Activated T-helper 1 cell treated with anti-CD3 and anti-CD28 coated beads, Interleukin-12 subunit alpha, Interleukin-12 subunit beta, Interleukin-2, Interleukin-4 antibody, amounts not matched to agents 30 ng/mL and 10 ng/mL and 1 ng/mL, durations not matched to agents 14 hours and 24 hours and 36 hours (primary cell): ENCODE measurements at regions of chr11 and their contacts with region 1.

Region 1: DNA sequence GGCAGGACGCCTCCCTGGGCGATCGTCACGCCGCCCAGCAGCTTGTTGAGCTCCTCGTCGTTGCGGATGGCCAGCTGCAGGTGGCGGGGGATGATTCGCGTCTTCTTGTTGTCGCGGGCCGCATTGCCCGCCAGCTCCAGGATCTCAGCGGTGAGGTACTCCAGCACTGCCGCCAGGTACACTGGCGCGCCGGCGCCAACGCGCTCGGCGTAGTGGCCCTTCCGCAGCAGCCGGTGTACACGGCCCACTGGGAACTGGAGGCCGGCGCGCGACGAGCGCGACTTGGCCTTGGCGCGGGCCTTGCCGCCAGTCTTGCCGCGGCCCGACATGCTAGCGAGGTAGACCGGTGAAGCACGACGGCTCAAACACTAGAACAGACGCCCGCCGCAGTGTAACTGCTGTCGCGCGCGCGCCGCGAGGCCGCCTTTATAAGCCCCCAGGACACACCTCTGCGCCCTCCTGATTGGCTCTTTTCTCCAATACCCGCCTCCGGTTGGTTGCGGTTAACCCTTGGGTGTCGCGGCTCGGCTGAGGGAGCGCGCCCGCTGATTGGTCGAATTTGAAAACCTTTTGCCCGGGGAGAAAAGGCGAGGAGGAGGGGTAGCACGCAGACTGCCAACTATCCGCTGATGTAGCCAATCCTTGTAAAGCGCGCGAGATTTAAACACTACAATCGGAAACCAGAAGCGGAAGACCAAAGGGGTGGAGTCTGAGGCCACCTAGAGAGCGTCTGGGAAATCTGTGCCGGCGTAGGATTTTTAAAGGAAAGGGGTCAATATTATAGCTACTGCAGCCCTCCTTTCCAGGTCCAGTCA is 6.4 kb downstream of the DPAGT1 start:
- DNase-seq: peak; percentile 100
- H3K4me3 Mint-ChIP-seq: peak overlapping the region; percentile 95
- H3K27ac Mint-ChIP-seq: peak overlapping the region; percentile 91
- H3K4me1 Mint-ChIP-seq: peaks cover 59% of the 10 kb centered on the region
- H3K27me3 Mint-ChIP-seq: peaks cover 4% of the 10 kb centered on the region

Region 2: DNA sequence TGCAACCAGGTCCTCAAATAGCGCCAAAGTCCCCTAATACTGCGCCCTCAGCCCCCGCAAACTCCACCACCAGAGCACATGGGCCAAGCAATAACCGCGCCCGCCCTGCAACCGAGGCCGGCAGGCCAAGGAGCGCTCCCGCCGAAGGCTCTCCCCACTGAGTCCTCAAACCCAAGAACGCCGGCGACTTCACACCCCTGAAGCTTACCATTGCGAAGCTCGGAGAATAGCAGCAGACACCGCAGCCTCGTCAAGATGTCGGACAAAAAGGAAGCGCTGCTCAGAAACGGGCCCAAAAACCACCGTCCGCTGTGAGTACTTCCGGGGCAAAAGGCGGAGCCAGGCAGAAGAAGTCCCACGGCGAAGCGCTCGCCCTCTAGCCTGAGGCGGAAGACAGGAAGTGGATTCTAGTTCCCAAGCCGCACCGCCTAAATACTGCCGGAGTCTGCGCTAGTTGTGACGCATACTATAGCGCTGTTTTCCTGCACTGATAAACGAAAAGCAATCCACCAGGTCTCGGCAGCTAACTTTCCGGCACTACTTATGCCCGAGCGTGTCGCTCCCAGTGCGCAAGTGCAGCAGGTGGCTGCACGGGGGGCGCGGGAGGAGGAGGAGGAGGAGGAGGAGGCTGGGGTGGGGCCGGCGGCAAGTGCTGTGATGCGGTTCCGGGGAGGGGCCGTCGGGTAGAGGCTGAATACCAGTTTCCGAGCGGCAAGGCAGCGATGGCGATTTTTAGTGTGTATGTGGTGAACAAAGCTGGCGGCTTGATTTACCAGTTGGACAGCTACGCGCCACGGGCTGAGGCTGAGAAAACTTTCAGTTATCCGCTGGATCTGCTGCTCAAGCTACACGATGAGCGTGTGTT is 77.0 kb before region 1 on chr11 and contains the starts of genes RPS25 and TRAPPC4:
- intact Hi-C with region 1: loop called (anchors 1 kb)
- DNase-seq: peak; percentile 92
- H3K4me3 Mint-ChIP-seq: peak within 1 kb of the TSS; percentile 99
- H3K27ac Mint-ChIP-seq: peak within 1 kb of the TSS; percentile 100
- H3K4me1 Mint-ChIP-seq: peaks cover 42% of the 10 kb centered on the region
- H3K27me3 Mint-ChIP-seq: no peaks in the 10 kb centered on the region
- total RNA-seq, gene RPS25: 1,440 and 1,455 TPM in 2 replicates
- total RNA-seq, gene TRAPPC4: 141 and 142 TPM in 2 replicates

Region 3: GRCh38 chr11:119057000-119057769 is 38.1 kb before region 1 on chr11 and contains the start of gene HYOU1:
- intact Hi-C with region 1: loop called (anchors 1 kb)
- DNase-seq: peak; percentile 98
- H3K4me3 Mint-ChIP-seq: peak within 1 kb of the TSS; percentile 97
- H3K27ac Mint-ChIP-seq: peak within 1 kb of the TSS; percentile 99
- H3K4me1 Mint-ChIP-seq: peaks cover 48% of the 10 kb centered on the region
- H3K27me3 Mint-ChIP-seq: no peaks in the 10 kb centered on the region
- total RNA-seq, gene HYOU1: 216 and 219 TPM in 2 replicates

Region 4: GRCh38 chr11:119168471-119169281 is 73.4 kb after region 1 on chr11 and contains the start of gene NLRX1:
- intact Hi-C with region 1: loop called (anchors 2 kb)
- DNase-seq: peak; percentile 77
- H3K4me3 Mint-ChIP-seq: peak within 1 kb of the TSS; percentile 92
- H3K27ac Mint-ChIP-seq: peak within 1 kb of the TSS; percentile 94
- H3K4me1 Mint-ChIP-seq: peaks cover 24% of the 10 kb centered on the region
- H3K27me3 Mint-ChIP-seq: peaks cover 2% of the 10 kb centered on the region
- total RNA-seq, gene NLRX1: 24.1 and 29.5 TPM in 2 replicates

Region 5: GRCh38 chr11:119334174-119334930 is 239.1 kb after region 1 on chr11 and contains the start of gene RNF26:
- intact Hi-C with region 1: loop called (anchors 1 kb)
- DNase-seq: peak; percentile 93
- H3K4me3 Mint-ChIP-seq: peak within 1 kb of the TSS; percentile 97
- H3K27ac Mint-ChIP-seq: peak within 1 kb of the TSS; percentile 96
- H3K4me1 Mint-ChIP-seq: peaks cover 53% of the 10 kb centered on the region
- H3K27me3 Mint-ChIP-seq: peaks cover 25% of the 10 kb centered on the region
- total RNA-seq, gene RNF26: 26.1 and 27.9 TPM in 2 replicates